Heart right ventricle (tissue), 16 donors: ENCODE measurements at regions of chr15 and their contacts with region 1.

Region 1: GRCh38 chr15:65326117-65326526 is 21.6 kb downstream of the RNU5B-1 start:
- DNase-seq: peak in 1 of 2 donors; percentile 36
- ATAC-seq: peak in 7 of 8 donors; percentile 47 to 75 (median 59)
- H3K4me3 ChIP-seq: no peak overlapping the region
- H3K27ac ChIP-seq: no peak overlapping the region
- H3K4me1 ChIP-seq: peaks cover 0 to 20% (median 6%) of the 10 kb centered on the region in 9 donors
- H3K27me3 ChIP-seq: no peaks in the 10 kb centered on the region
- CTCF ChIP-seq: no peak

Region 2: DNA sequence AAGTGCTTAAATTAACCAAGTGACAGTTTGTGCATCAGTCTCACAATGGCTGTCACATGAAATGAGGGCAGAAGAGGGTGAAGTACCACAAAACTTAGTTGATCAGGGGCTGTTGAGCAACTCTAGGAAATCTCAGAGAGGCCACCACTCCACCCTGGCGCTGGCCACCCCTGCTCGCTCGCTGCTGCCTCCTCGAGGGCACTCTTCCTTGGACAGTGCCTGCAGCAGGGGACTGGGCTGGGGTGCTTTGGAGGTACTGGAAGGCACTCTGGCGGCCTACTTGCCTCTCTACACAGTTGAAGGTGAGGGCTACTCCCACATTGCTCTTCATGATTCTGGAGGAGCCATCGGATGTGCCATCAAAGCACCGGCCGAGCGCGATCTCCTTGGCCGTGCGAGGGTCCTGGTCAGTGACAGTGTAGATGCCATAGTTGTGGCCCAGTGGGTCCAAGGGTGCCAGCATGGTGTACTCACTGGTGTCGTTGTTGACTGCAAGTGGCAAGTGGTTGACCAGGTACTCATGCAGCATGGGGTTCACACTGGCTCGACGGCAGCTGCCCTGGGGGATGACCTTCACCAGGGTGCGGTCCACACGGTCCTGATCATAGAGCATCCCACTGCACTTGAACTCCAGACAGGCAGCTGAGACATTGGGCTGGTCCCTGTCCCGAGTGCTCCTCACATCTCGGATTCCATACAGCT is 129.3 kb before region 1 on chr15:
- intact Hi-C with region 1: no loop called
- DNase-seq: no peak
- ATAC-seq: peak in 1 of 8 donors; percentile 28
- H3K4me3 ChIP-seq: no peak overlapping the region
- H3K27ac ChIP-seq: no peak overlapping the region
- H3K4me1 ChIP-seq: peaks cover 0 to 5% (median 0%) of the 10 kb centered on the region in 9 donors
- H3K27me3 ChIP-seq: no peaks in the 10 kb centered on the region
- CTCF ChIP-seq: no peak

Region 3: GRCh38 chr15:65368302-65369211 is 42.4 kb after region 1 on chr15:
- intact Hi-C with region 1: loop called in 2 of 10 experiments (anchors 5 kb)
- DNase-seq: peak in 1 of 2 donors; percentile 22
- ATAC-seq: peak in 7 of 8 donors; percentile 35 to 80 (median 43)
- H3K4me3 ChIP-seq: no peak overlapping the region
- H3K27ac ChIP-seq: no peak overlapping the region
- H3K4me1 ChIP-seq: peaks cover 0 to 16% (median 0%) of the 10 kb centered on the region in 9 donors
- H3K27me3 ChIP-seq: peaks cover 0 to 24% (median 12%) of the 10 kb centered on the region in 7 donors
- CTCF ChIP-seq: no peak

Region 4: DNA sequence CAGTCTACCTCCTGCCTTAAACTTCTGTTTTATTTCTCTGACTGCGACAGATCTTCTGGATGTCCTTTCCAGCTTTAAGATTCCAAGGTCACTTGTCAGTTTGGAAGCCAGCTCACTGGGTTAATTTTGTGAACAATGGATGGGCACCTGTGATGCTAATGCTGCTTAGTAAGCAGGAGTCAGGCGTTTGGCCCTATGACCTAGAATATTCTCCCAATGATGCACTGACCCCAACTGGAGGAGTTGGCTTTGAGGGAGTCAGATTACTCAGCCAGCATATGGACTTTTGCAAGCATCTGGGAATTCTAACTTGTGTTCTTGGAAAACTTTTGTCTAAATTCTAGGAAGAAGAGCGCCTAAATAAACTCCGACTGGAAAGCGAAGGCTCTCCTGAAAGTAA is 232.2 kb after region 1 on chr15:
- intact Hi-C with region 1: no loop called
- DNase-seq: no peak
- ATAC-seq: no peak
- H3K4me3 ChIP-seq: no peak overlapping the region
- H3K27ac ChIP-seq: no peak overlapping the region
- H3K4me1 ChIP-seq: no peaks in the 10 kb centered on the region
- H3K27me3 ChIP-seq: no peaks in the 10 kb centered on the region
- CTCF ChIP-seq: no peak